H1 (cell line): ENCODE measurements at regions of chr7 and their contacts with region 1.

Region 1: GRCh38 chr7:86643561-86644281 is at the start of gene GRM3:
- DNase-seq: peak in 1 of 2 experiments; percentile 82
- H3K4me3 ChIP-seq: peak within 1 kb of the TSS; percentile 68 to 76 (median 72)
- H3K27ac ChIP-seq: no peak within 1 kb of the TSS
- H3K4me1 ChIP-seq: peaks cover 0 to 7% (median 5%) of the 10 kb centered on the region in 4 experiments; a peak in 3 of 7 replicates
- H3K27me3 ChIP-seq: peaks cover 0 to 12% (median 4%) of the 10 kb centered on the region in 4 experiments; a peak in 5 of 7 replicates
- CTCF ChIP-seq: no peak
- EP300 ChIP-seq: no peak
- POLR2A ChIP-seq: no peak
- RAD21 ChIP-seq: no peak
- total RNA-seq, gene GRM3: 3.4 and 4.2 TPM in 2 replicates

Region 2: DNA sequence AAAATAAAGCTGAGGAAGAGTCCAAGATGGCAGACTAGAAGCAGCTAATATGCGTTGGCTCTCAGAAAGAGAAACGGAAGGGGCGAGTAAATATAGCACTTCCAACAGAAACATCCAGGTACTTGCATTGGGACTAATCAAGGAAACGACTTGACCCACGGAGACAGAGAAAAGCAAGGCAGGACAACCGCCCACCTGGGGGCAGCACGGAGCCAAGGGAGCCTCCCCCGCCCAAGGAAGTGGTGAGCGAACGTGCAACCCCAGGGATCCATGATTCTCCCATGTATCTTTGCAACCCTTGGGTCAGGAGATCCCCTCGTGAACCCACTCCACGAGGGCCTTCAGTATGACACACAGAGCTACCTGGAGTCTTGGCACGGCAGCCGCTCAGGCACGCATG is 45.4 kb before region 1 on chr7:
- CTCF ChIA-PET with region 1: interaction called, 12 read pairs
- POLR2A ChIA-PET with region 1: interaction called, 3 read pairs
- DNase-seq: peak; percentile 56 to 88
- H3K4me3 ChIP-seq: no peak overlapping the region
- H3K27ac ChIP-seq: no peak overlapping the region
- H3K4me1 ChIP-seq: no peaks in the 10 kb centered on the region
- H3K27me3 ChIP-seq: no peaks in the 10 kb centered on the region
- CTCF ChIP-seq: peak; percentile 61 to 80 (median 79)
- EP300 ChIP-seq: no peak
- POLR2A ChIP-seq: no peak
- RAD21 ChIP-seq: peak; percentile 69

Region 3: GRCh38 chr7:86760236-86760635 is 116.5 kb after region 1 on chr7:
- CTCF ChIA-PET with region 1: no interaction called
- POLR2A ChIA-PET with region 1: no interaction called
- DNase-seq: peak in 1 of 2 experiments; percentile 15
- H3K4me3 ChIP-seq: peak overlapping the region in 1 of 4 experiments; percentile 1; a peak in 1 of 8 replicates
- H3K27ac ChIP-seq: no peak overlapping the region
- H3K4me1 ChIP-seq: peaks cover 0 to 19% (median 9%) of the 10 kb centered on the region in 4 experiments; a peak in 5 of 7 replicates
- H3K27me3 ChIP-seq: no peaks in the 10 kb centered on the region
- CTCF ChIP-seq: no peak
- EP300 ChIP-seq: no peak
- POLR2A ChIP-seq: no peak
- RAD21 ChIP-seq: no peak

Region 4: DNA sequence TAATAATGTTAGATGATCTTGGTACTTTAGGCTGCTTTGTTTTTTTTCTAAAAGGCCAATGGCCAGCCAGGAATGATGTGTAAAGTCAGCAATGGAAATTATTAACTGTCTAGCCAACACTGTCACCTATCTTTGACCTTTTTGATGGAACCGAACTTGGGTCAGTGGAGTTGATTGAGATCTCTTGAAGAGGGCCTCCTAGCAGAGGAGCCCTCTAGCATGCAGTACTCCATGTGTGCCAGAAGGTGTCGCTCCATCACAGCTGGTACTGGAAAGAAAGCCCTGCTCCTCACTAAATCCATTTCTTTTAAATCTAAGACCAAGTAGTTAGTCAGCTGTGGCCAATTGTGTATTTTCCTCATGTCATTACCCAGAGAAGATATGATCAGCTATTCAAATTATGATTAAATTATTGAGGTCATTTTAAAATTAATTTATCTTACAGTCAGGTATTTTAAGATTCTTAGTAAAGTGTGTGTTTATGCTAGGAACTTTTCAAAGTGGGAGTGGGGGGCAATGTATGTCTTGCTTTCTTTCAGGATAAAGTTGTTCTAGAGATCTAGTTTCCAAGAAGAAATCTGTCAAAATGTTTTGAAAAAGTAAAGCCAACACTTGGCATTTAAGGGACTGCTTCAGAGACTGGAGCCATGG is 668.6 kb after region 1 on chr7:
- CTCF ChIA-PET with region 1: no interaction called
- POLR2A ChIA-PET with region 1: no interaction called
- DNase-seq: peak; percentile 9 to 58
- H3K4me3 ChIP-seq: no peak overlapping the region
- H3K27ac ChIP-seq: no peak overlapping the region
- H3K4me1 ChIP-seq: no peaks in the 10 kb centered on the region
- H3K27me3 ChIP-seq: no peaks in the 10 kb centered on the region
- CTCF ChIP-seq: peak; percentile 87 to 96 (median 92)
- EP300 ChIP-seq: no peak
- POLR2A ChIP-seq: no peak
- RAD21 ChIP-seq: peak; percentile 98